Activated CD8-positive, alpha-beta T cell treated with anti-CD3 and anti-CD28 coated beads for 36 hours (primary cell): ENCODE measurements at regions of chr10 and their contacts with region 1.

Region 1: GRCh38 chr10:116765547-116766162 is 23.3 kb upstream of the HSPA12A start:
- DNase-seq: peak; percentile 68
- ATAC-seq: no peak
- H3K4me3 Mint-ChIP-seq: no peak overlapping the region
- H3K27ac Mint-ChIP-seq: no peak overlapping the region
- H3K4me1 Mint-ChIP-seq: no peaks in the 10 kb centered on the region
- H3K27me3 Mint-ChIP-seq: peaks cover 38% of the 10 kb centered on the region
- CTCF ChIP-seq: peak; percentile 28

Region 2: DNA sequence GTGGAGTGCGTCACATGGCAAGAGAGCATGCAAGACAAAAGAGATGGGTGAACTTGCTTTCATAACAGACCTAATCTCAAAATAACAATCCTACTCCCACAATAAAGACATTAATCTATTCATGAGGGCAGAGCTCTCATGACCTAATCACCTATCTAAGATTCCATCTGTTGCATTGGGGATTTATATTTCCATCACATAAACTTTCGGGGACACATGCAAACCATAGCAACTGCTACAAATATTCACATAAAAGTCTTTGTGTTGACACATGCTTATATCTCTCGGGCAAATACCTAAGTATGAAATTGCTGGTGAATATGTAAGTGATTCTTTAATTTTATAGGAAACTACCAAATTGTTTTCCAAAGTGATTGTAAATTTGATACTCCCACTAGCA is 190.9 kb before region 1 on chr10:
- CTCF ChIA-PET with region 1: no interaction called
- POLR2A ChIA-PET with region 1: no interaction called
- intact Hi-C with region 1: no loop called
- DNase-seq: no peak
- ATAC-seq: no peak
- H3K4me3 Mint-ChIP-seq: no peak overlapping the region
- H3K27ac Mint-ChIP-seq: no peak overlapping the region
- H3K4me1 Mint-ChIP-seq: no peaks in the 10 kb centered on the region
- H3K27me3 Mint-ChIP-seq: peaks cover 5% of the 10 kb centered on the region
- CTCF ChIP-seq: no peak

Region 3: GRCh38 chr10:116690356-116691322 is 75.0 kb before region 1 on chr10:
- CTCF ChIA-PET with region 1: no interaction called
- POLR2A ChIA-PET with region 1: no interaction called
- intact Hi-C with region 1: loop called (anchors 5 kb)
- DNase-seq: no peak
- ATAC-seq: no peak
- H3K4me3 Mint-ChIP-seq: no peak overlapping the region
- H3K27ac Mint-ChIP-seq: no peak overlapping the region
- H3K4me1 Mint-ChIP-seq: no peaks in the 10 kb centered on the region
- H3K27me3 Mint-ChIP-seq: peaks cover 25% of the 10 kb centered on the region
- CTCF ChIP-seq: no peak

Region 4: GRCh38 chr10:116733566-116733965 is 32.1 kb before region 1 on chr10:
- CTCF ChIA-PET with region 1: no interaction called
- POLR2A ChIA-PET with region 1: no interaction called
- intact Hi-C with region 1: no loop called
- DNase-seq: no peak
- ATAC-seq: no peak
- H3K4me3 Mint-ChIP-seq: no peak overlapping the region
- H3K27ac Mint-ChIP-seq: no peak overlapping the region
- H3K4me1 Mint-ChIP-seq: no peaks in the 10 kb centered on the region
- H3K27me3 Mint-ChIP-seq: peaks cover 46% of the 10 kb centered on the region
- CTCF ChIP-seq: no peak

Region 5: GRCh38 chr10:116809483-116810119 is 43.9 kb after region 1 on chr10:
- CTCF ChIA-PET with region 1: no interaction called
- POLR2A ChIA-PET with region 1: no interaction called
- intact Hi-C with region 1: no loop called
- DNase-seq: no peak
- ATAC-seq: no peak
- H3K4me3 Mint-ChIP-seq: no peak overlapping the region
- H3K27ac Mint-ChIP-seq: no peak overlapping the region
- H3K4me1 Mint-ChIP-seq: no peaks in the 10 kb centered on the region
- H3K27me3 Mint-ChIP-seq: peaks cover 7% of the 10 kb centered on the region
- CTCF ChIP-seq: no peak

Region 6: GRCh38 chr10:116819999-116820677 is 54.5 kb after region 1 on chr10:
- CTCF ChIA-PET with region 1: no interaction called
- POLR2A ChIA-PET with region 1: no interaction called
- intact Hi-C with region 1: no loop called
- DNase-seq: no peak
- ATAC-seq: no peak
- H3K4me3 Mint-ChIP-seq: no peak overlapping the region
- H3K27ac Mint-ChIP-seq: no peak overlapping the region
- H3K4me1 Mint-ChIP-seq: no peaks in the 10 kb centered on the region
- H3K27me3 Mint-ChIP-seq: peaks cover 15% of the 10 kb centered on the region
- CTCF ChIP-seq: no peak